ENCODE measurements at regions of chr2 and their contacts with region 1.

Region 1: GRCh38 chr2:232781765-232782164 is 5.4 kb upstream of the KCNJ13 start:
- DNase-seq: peak; percentile 27
- H3K4me3 Mint-ChIP-seq: no peak overlapping the region
- H3K27ac Mint-ChIP-seq: peak overlapping the region; percentile 85
- H3K4me1 Mint-ChIP-seq: peaks cover 22% of the 10 kb centered on the region
- H3K27me3 Mint-ChIP-seq: no peaks in the 10 kb centered on the region

Region 2: DNA sequence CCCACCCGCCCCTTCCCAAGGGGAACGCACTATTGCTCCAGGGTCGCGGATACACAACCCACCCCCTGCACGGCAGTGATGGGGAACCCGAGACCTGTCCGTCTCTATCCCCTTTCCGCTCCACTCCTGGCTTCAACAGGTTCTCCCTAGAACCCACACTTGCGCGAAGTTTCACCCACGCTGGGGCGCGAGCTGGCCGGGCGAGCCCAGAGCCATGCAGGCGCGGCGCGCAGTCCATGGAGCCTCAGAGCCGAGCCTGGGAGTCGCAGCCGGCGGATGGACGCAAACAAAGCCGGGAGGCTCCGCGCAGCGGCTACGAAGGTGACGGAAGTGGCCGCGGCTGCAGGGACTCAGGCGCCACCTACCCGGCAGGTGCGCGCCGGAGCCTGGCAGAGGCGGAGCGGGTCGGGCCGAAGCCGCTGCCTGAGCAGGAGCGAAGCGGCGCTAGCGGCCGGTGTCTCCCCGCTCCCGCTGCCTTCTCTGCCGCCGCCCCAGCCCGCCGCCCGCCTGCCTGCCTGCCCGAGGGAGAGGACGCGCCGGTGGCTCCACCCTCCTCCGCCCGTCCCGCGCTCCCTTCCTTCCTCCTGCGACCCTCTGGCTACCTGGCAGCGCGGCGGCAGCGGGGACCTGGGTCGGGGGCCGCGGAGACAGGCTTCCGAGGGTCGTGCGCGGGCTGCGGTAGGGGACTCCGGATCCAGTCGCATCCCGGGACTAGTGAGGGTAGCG is 361.1 kb before region 1 on chr2:
- intact Hi-C with region 1: no loop called
- DNase-seq: no peak
- H3K4me3 Mint-ChIP-seq: no peak overlapping the region
- H3K27ac Mint-ChIP-seq: no peak overlapping the region
- H3K4me1 Mint-ChIP-seq: no peaks in the 10 kb centered on the region
- H3K27me3 Mint-ChIP-seq: peaks cover 51% of the 10 kb centered on the region

Region 3: DNA sequence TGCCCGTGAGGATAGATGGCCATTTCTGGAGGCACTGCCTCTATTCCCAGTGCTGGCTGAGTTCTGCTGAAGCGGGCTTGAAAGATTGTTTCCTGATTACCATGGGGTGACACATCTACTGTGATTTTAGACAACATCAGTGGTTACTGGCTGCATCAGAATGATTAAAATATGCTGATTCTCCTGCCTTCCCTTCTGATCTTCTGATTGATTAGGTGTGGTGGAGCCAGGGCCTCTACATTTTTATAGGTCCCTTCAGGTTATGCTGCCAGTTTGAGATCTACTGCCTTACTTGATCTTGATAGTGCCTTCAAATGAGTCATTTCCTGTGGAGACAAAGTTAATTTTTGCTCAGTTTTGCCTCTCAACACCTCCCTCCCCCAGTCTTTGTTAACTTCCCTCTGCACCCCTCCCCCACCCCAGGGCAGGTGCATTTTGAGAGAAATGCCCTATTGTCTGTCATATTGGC is 56.7 kb after region 1 on chr2:
- intact Hi-C with region 1: loop called (anchors 1 kb)
- DNase-seq: peak; percentile 40
- H3K4me3 Mint-ChIP-seq: peak overlapping the region; percentile 12
- H3K27ac Mint-ChIP-seq: peak overlapping the region; percentile 83
- H3K4me1 Mint-ChIP-seq: peaks cover 34% of the 10 kb centered on the region
- H3K27me3 Mint-ChIP-seq: no peaks in the 10 kb centered on the region

Region 4: GRCh38 chr2:232854082-232854481 is 72.3 kb after region 1 on chr2:
- intact Hi-C with region 1: no loop called
- DNase-seq: no peak
- H3K4me3 Mint-ChIP-seq: no peak overlapping the region
- H3K27ac Mint-ChIP-seq: no peak overlapping the region
- H3K4me1 Mint-ChIP-seq: no peaks in the 10 kb centered on the region
- H3K27me3 Mint-ChIP-seq: no peaks in the 10 kb centered on the region

Measured in activated T-helper 1 cell treated with anti-CD3 and anti-CD28 coated beads, Interleukin-12 subunit alpha, Interleukin-12 subunit beta, Interleukin-2, Interleukin-4 antibody, amounts not matched to agents 30 ng/mL and 10 ng/mL and 1 ng/mL, durations not matched to agents 14 hours and 24 hours and 36 hours (primary cell).